WTC11 (cell line): ENCODE measurements at regions of chr15 and their contacts with region 1.

Region 1: DNA sequence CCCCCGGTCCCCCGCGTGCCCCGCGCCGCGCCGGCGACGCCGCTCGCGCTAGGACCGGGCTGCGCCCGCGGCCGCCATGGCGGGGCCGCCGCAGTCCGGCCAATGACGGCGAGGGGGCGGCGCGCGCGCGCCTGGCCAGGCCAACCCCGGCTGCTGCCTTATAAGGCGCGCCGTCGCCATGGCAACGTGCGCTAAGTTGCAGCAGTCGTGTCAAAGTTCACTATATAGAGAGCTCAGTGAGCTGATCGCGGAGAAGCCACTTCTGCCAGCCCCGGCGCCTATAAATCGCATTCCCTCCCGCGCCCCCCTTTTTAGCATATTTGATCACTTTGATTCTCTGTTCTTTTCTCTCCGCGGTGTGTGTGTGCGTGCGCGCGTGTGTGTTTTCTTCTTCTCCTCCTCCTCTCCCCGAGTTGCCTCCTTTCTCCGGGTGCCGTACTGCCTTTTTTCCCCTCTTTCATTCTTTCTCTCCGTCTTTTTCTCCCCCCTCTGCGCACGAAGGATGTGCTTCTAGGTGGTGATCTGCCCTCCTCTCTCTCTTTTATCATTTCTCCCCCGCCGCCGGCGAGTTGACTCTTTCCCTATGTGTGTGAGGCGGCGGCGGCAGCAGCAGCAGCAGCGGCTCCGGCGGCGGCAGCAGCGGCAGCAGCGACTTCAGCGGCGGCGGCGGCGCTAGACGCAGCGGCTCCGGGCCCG is at the start of gene NR2F2:
- DNase-seq: peak; percentile 91
- ATAC-seq: peak; percentile 68
- H3K4me3 Mint-ChIP-seq: peak within 1 kb of the TSS; percentile 76
- H3K27ac Mint-ChIP-seq: no peak within 1 kb of the TSS
- H3K4me1 Mint-ChIP-seq: peaks cover 69% of the 10 kb centered on the region
- H3K27me3 Mint-ChIP-seq: peaks cover 96% of the 10 kb centered on the region
- CTCF ChIP-seq: no peak
- total RNA-seq, gene NR2F2: 0.27 to 0.57 TPM (median 0.55 TPM) in 3 replicates

Region 2: DNA sequence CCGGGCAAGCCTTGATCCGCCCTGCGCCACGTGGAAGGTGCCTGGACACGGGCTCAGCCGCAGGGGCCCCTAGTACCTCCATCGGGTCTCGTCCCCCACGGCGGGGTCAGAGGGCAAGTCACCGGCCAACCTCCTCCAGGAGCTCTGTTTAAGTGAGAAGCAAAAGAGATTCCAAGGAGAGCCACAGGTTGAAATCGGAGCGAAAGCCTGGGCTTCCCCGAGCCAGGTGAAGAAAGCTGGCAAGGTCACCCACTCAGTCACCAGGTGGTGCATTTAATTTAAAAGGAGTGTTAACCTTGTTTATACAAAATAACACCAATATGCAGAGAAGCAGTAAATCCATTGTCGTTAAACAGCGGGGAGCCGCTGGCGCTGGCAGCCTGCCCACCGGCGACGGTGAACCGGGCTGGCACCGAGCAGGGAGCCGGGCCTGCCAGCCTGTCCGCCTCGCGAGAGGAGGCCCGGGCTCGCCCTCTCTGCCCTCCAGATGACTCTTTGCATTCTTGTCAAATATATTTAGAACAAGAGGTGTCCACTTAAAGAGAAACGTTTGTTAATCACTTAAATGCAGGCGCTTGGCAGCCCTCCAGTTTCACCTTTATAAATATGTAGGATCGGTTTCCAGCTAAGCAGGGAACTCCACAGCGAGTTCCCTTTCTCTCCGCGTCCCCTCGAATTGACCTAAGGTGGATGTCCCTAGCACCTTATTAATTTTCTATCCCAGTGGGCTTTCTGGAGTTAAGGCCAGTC is 277.4 kb before region 1 on chr15:
- CTCF ChIA-PET with region 1: interaction called, 13 read pairs
- POLR2A ChIA-PET with region 1: no interaction called
- DNase-seq: peak; percentile 46
- ATAC-seq: peak; percentile 52
- H3K4me3 Mint-ChIP-seq: peak overlapping the region; percentile 70
- H3K27ac Mint-ChIP-seq: no peak overlapping the region; the same call in 1 of the 2 replicates
- H3K4me1 Mint-ChIP-seq: peaks cover 16% of the 10 kb centered on the region
- H3K27me3 Mint-ChIP-seq: peaks cover 97% of the 10 kb centered on the region
- CTCF ChIP-seq: no peak

Region 3: GRCh38 chr15:96345560-96346399 is 15.2 kb after region 1 on chr15:
- CTCF ChIA-PET with region 1: interaction called, 76 read pairs
- POLR2A ChIA-PET with region 1: interaction called, 5 read pairs
- DNase-seq: peak; percentile 49
- ATAC-seq: peak; percentile 23
- H3K4me3 Mint-ChIP-seq: peak overlapping the region; percentile 81
- H3K27ac Mint-ChIP-seq: no peak overlapping the region
- H3K4me1 Mint-ChIP-seq: peaks cover 82% of the 10 kb centered on the region
- H3K27me3 Mint-ChIP-seq: no peaks in the 10 kb centered on the region; the same call in 1 of the 2 replicates
- CTCF ChIP-seq: no peak

Region 4: DNA sequence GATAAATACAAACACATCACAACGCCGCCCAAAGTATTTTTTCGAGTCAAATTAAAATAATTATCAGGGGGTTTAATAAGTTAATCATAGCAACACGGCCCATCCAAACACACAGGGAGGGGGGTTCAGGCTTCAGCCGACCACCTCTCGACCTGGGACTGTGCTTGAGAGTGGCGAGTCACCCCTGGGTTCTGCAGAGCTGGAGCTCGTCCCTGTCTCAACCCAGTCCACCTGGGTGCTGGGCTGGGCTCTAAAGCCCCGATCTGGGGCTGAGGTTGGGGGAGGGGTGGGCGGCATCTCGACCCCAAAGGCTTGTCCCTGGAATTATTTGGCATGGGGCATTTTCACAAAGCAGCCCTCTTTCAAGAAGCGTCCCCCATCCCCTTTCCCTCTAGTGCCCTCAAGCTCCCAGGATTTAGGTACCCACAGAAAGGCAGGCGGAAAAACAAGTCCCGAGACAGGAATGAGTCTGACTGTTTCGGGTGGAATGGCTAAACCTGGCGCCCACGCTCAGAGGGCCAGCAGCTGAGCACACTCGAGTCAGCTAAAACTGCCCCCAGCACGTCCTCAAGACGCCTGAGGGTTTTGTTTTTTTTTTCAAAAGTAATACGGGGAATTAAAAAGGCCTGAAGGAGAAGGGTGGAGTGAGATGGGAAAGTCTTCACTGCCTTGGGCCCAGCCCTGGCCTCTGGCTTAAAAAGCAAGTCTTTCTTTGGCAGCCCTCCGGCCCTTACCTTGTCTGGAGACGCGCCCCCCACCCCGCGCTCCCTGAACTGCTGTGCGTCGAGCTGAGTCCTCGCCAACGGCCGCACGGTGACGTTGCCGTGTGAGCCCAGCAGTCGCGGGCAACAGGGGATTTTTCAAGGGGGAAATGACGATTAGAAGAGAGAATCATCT is 32.4 kb after region 1 on chr15:
- CTCF ChIA-PET with region 1: interaction called, 27 read pairs
- POLR2A ChIA-PET with region 1: interaction called, 3 read pairs
- DNase-seq: peak; percentile 71
- ATAC-seq: peak; percentile 25
- H3K4me3 Mint-ChIP-seq: peak overlapping the region; percentile 64
- H3K27ac Mint-ChIP-seq: no peak overlapping the region
- H3K4me1 Mint-ChIP-seq: peaks cover 63% of the 10 kb centered on the region
- H3K27me3 Mint-ChIP-seq: no peaks in the 10 kb centered on the region
- CTCF ChIP-seq: no peak

Region 5: GRCh38 chr15:96416934-96417759 is 86.5 kb after region 1 on chr15:
- CTCF ChIA-PET with region 1: interaction called, 11 read pairs
- POLR2A ChIA-PET with region 1: no interaction called
- DNase-seq: peak; percentile 59
- ATAC-seq: peak; percentile 61
- H3K4me3 Mint-ChIP-seq: peak overlapping the region; percentile 54
- H3K27ac Mint-ChIP-seq: no peak overlapping the region
- H3K4me1 Mint-ChIP-seq: peaks cover 61% of the 10 kb centered on the region
- H3K27me3 Mint-ChIP-seq: peaks cover 100% of the 10 kb centered on the region
- CTCF ChIP-seq: no peak